ENCODE measurements at regions of chr3 and their contacts with region 1.

Region 1: GRCh38 chr3:30319713-30320112 is 286.7 kb upstream of the TGFBR2 start:
- DNase-seq: peak in 8 of 9 experiments; percentile 4 to 76 (median 44)
- ATAC-seq: peak; percentile 98
- H3K4me3 ChIP-seq: no peak overlapping the region
- H3K4me3 Mint-ChIP-seq: no peak overlapping the region
- H3K27ac ChIP-seq: no peak overlapping the region
- H3K27ac Mint-ChIP-seq: peak overlapping the region; percentile 37
- H3K4me1 ChIP-seq: peaks cover 9% of the 10 kb centered on the region
- H3K4me1 Mint-ChIP-seq: peaks cover 18% of the 10 kb centered on the region
- H3K27me3 ChIP-seq: no peaks in the 10 kb centered on the region
- H3K27me3 Mint-ChIP-seq: no peaks in the 10 kb centered on the region
- CTCF ChIP-seq: peak; percentile 61

Region 2: DNA sequence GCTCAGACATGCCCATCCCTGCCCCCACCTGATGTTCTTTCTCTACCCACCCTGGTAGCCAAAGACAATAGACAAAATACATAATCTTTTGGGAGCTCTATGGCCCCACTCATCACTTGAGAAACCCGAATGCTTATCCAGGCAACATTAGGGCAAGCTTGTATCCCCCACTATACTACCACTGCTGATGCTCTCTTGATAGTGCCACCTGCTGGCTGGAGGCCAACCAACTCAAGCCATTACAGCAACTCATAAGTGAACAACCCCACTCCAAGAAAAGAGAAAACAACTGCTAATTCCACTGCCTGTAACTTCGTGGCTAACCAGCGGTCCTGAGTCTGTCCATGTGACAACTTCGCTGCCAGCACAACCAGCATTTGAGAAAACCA is 55.8 kb before region 1 on chr3:
- CTCF ChIA-PET with region 1: interaction called, 4 read pairs
- POLR2A ChIA-PET with region 1: no interaction called
- intact Hi-C with region 1: loop called in 1 of 2 experiments (anchors 1 kb)
- DNase-seq: peak in 1 of 9 experiments; percentile 8
- ATAC-seq: no peak
- H3K4me3 ChIP-seq: no peak overlapping the region
- H3K4me3 Mint-ChIP-seq: no peak overlapping the region
- H3K27ac ChIP-seq: no peak overlapping the region
- H3K27ac Mint-ChIP-seq: no peak overlapping the region
- H3K4me1 ChIP-seq: peaks cover 12% of the 10 kb centered on the region
- H3K4me1 Mint-ChIP-seq: peaks cover 23% of the 10 kb centered on the region
- H3K27me3 ChIP-seq: no peaks in the 10 kb centered on the region
- H3K27me3 Mint-ChIP-seq: no peaks in the 10 kb centered on the region
- CTCF ChIP-seq: no peak

Region 3: DNA sequence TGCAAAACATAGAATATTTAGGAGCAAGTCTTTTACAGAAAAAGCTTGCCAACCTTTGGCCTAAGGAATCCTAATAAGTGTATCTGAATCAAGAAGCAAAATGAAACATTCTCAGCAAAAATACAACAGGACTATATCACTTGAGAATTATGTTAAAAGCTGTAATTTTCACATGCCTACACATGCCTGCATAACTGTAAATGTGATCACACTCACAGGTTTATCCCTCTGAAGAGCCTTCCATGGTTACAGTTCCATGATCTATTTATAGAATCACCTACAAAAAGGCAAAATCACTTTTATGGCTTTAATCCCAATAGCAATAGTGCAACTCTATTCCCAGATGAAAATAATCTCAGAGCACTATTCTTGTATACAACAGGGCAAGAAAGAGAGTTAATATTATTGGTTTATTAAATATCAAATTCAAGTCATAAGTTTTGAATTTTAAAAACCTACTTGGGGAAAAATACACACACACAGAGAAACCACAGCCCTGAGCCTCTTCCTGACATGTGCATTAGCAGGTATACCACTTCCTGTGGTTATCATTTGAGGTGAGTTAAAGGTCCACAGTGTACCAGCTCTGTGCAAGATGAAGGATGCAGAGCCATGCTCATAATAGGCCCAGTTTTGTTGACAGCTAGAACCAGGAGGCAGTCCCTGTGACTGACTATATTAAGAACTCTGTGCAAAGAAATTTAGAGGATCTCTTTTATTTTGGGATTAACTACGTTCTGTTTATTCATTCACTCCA is 34.2 kb after region 1 on chr3:
- CTCF ChIA-PET with region 1: interaction called, 10 read pairs
- POLR2A ChIA-PET with region 1: interaction called, 3 read pairs
- intact Hi-C with region 1: no loop called
- DNase-seq: peak; percentile 3 to 91 (median 53)
- ATAC-seq: peak; percentile 98
- H3K4me3 ChIP-seq: peak overlapping the region in 1 of 2 experiments; percentile 2
- H3K4me3 Mint-ChIP-seq: peak overlapping the region; percentile 64
- H3K27ac ChIP-seq: peak overlapping the region in 1 of 2 experiments; percentile 25
- H3K27ac Mint-ChIP-seq: peak overlapping the region; percentile 94
- H3K4me1 ChIP-seq: peaks cover 82% of the 10 kb centered on the region
- H3K4me1 Mint-ChIP-seq: peaks cover 85% of the 10 kb centered on the region
- H3K27me3 ChIP-seq: no peaks in the 10 kb centered on the region
- H3K27me3 Mint-ChIP-seq: no peaks in the 10 kb centered on the region
- CTCF ChIP-seq: no peak

Region 4: DNA sequence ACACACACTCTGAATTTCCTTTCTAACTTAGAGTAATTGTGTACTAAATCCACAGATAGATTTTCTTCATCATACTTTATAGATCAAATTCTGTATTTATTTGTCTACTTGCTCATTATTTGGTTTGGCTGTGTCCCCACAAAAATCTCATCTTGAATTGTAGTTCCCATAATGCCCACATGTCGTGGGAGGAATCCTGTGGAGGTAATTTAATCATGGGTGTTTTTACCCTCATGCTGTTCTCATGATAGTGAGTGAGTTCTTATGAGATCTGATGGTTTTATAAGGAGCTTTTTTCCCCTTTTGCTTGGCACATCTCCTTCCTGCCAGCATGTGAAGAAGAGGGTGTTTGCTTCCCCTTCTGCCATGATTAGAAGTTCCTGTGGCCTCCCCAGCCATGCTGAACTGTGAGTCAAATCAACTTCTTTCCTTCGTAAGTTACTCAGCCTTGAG is 88.4 kb after region 1 on chr3:
- CTCF ChIA-PET with region 1: no interaction called
- POLR2A ChIA-PET with region 1: no interaction called
- intact Hi-C with region 1: no loop called
- DNase-seq: no peak
- ATAC-seq: no peak
- H3K4me3 ChIP-seq: no peak overlapping the region
- H3K4me3 Mint-ChIP-seq: no peak overlapping the region
- H3K27ac ChIP-seq: no peak overlapping the region
- H3K27ac Mint-ChIP-seq: no peak overlapping the region
- H3K4me1 ChIP-seq: no peaks in the 10 kb centered on the region
- H3K4me1 Mint-ChIP-seq: peaks cover under 1% of the 10 kb centered on the region
- H3K27me3 ChIP-seq: no peaks in the 10 kb centered on the region
- H3K27me3 Mint-ChIP-seq: no peaks in the 10 kb centered on the region
- CTCF ChIP-seq: no peak

Region 5: GRCh38 chr3:30475038-30475808 is 155.5 kb after region 1 on chr3:
- CTCF ChIA-PET with region 1: interaction called, 4 read pairs
- POLR2A ChIA-PET with region 1: no interaction called
- intact Hi-C with region 1: loop called in 1 of 2 experiments (anchors 5 kb)
- DNase-seq: peak in 5 of 9 experiments; percentile 20 to 63 (median 37)
- ATAC-seq: peak; percentile 85
- H3K4me3 ChIP-seq: no peak overlapping the region
- H3K4me3 Mint-ChIP-seq: no peak overlapping the region
- H3K27ac ChIP-seq: no peak overlapping the region
- H3K27ac Mint-ChIP-seq: peak overlapping the region; percentile 50
- H3K4me1 ChIP-seq: peaks cover 20% of the 10 kb centered on the region
- H3K4me1 Mint-ChIP-seq: peaks cover 42% of the 10 kb centered on the region
- H3K27me3 ChIP-seq: no peaks in the 10 kb centered on the region
- H3K27me3 Mint-ChIP-seq: no peaks in the 10 kb centered on the region
- CTCF ChIP-seq: no peak

Region 6: DNA sequence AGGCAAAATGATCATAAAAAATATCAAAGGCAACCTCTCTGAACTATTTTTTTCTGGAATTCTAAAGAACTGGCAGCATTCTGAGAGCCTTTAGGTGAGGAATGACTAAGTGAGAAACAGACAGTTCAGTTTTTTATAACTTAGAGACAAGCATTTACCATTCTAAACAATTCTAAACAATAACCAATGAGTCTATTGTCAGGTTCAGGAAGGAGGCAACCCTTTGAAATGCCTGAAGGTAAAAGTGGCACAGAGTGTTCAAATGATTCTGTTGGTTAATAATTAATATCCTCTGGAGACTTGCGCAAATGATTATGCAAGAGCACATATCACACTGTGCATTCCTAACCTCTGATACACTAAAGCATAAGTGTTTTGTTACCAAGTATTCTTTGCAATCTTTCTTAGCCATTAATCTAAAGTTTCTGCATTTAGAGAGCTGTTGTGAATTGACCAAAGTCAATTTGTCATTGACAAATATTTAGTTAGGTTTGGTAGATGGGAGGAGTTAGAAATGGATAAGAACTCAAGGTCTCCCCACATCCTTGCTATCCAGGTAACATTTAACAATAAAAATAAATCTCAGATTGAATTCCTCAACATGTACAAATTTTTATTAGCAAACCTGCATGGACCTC is 277.5 kb after region 1 on chr3:
- CTCF ChIA-PET with region 1: interaction called, 3 read pairs
- POLR2A ChIA-PET with region 1: no interaction called
- intact Hi-C with region 1: loop called in 1 of 2 experiments (anchors 5 kb)
- DNase-seq: no peak
- ATAC-seq: no peak
- H3K4me3 ChIP-seq: no peak overlapping the region
- H3K4me3 Mint-ChIP-seq: no peak overlapping the region
- H3K27ac ChIP-seq: no peak overlapping the region
- H3K27ac Mint-ChIP-seq: no peak overlapping the region
- H3K4me1 ChIP-seq: peaks cover 25% of the 10 kb centered on the region
- H3K4me1 Mint-ChIP-seq: peaks cover 34% of the 10 kb centered on the region
- H3K27me3 ChIP-seq: no peaks in the 10 kb centered on the region
- H3K27me3 Mint-ChIP-seq: no peaks in the 10 kb centered on the region
- CTCF ChIP-seq: no peak

Measured in CD8-positive, alpha-beta T cell (primary cell).